ENCODE measurements at regions of chr19 and their contacts with region 1.

Region 1: GRCh38 chr19:35284153-35285094 is 2.1 kb downstream of the HAMP start:
- DNase-seq: no peak
- H3K4me3 ChIP-seq: no peak overlapping the region
- H3K27ac ChIP-seq: no peak overlapping the region
- H3K4me1 ChIP-seq: peaks cover 6% of the 10 kb centered on the region; the same call in 1 of the 2 replicates
- H3K27me3 ChIP-seq: no peaks in the 10 kb centered on the region
- CTCF ChIP-seq: no peak

Region 2: DNA sequence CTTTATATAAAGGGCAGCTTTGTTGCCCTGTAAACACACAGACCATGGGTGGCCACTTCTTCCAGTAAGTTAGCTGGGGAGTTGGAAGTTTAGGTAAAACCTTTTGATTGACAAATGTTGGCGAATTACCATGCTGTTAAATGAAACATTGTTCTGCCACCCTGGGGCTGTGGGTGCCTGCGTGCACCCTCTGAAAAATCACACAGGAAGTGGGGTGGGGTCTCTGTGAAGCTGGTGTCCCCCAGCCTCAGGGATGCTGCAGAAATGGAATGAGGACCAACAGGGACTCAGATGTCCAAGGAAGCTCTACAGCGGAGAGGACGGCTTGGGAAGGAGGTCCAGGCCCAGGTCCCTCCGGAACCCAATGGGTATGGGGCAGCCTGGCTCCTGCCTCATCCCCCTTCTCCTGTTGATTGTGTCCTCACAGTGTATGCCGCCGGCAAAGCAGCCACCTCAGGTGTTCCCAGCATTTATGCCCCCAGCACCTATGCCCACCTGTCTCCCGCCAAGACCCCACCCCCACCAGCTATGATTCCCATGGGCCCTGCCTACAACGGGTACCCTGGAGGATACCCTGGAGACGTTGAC is 18.4 kb before region 1 on chr19:
- CTCF ChIA-PET with region 1: no interaction called
- POLR2A ChIA-PET with region 1: no interaction called
- intact Hi-C with region 1: no loop called
- DNase-seq: no peak
- H3K4me3 ChIP-seq: no peak overlapping the region
- H3K27ac ChIP-seq: no peak overlapping the region
- H3K4me1 ChIP-seq: peaks cover 14% of the 10 kb centered on the region; the same call in 1 of the 2 replicates
- H3K27me3 ChIP-seq: no peaks in the 10 kb centered on the region
- CTCF ChIP-seq: no peak

Region 3: GRCh38 chr19:35302446-35302845 is 18.0 kb after region 1 on chr19:
- CTCF ChIA-PET with region 1: no interaction called
- POLR2A ChIA-PET with region 1: no interaction called
- intact Hi-C with region 1: no loop called
- DNase-seq: no peak
- H3K4me3 ChIP-seq: no peak overlapping the region
- H3K27ac ChIP-seq: no peak overlapping the region
- H3K4me1 ChIP-seq: peaks cover 7% of the 10 kb centered on the region
- H3K27me3 ChIP-seq: no peaks in the 10 kb centered on the region
- CTCF ChIP-seq: no peak

Region 4: GRCh38 chr19:35404879-35405622 is 120.6 kb after region 1 on chr19:
- CTCF ChIA-PET with region 1: no interaction called
- POLR2A ChIA-PET with region 1: no interaction called
- intact Hi-C with region 1: no loop called
- DNase-seq: peak; percentile 41 to 67
- H3K4me3 ChIP-seq: no peak overlapping the region
- H3K27ac ChIP-seq: no peak overlapping the region
- H3K4me1 ChIP-seq: no peaks in the 10 kb centered on the region
- H3K27me3 ChIP-seq: peaks cover 50% of the 10 kb centered on the region
- CTCF ChIP-seq: no peak

Region 5: DNA sequence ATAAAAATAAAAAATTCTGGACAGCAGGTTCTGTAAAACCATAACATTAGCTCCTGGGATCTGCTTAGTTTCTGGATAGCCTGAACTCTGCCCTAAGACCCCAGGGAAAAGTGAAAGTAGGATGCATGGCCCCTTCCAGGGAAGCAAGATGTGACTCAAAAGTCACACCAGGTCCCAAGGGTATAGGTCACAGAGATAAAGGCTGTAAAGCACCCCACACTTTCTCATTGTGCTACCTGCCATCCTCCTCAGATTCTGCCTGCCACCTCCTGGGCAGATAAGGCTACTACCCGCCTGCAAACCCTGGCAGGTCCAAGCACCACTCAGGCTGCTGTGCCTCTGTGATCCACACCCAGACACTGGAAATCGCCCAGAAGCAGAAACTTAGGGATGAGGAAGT is 184.2 kb after region 1 on chr19:
- CTCF ChIA-PET with region 1: no interaction called
- POLR2A ChIA-PET with region 1: no interaction called
- intact Hi-C with region 1: loop called (anchors 5 kb)
- DNase-seq: peak; percentile 38 to 55
- H3K4me3 ChIP-seq: no peak overlapping the region
- H3K27ac ChIP-seq: no peak overlapping the region
- H3K4me1 ChIP-seq: no peaks in the 10 kb centered on the region
- H3K27me3 ChIP-seq: no peaks in the 10 kb centered on the region
- CTCF ChIP-seq: peak; percentile 79

Measured in PC-9 (cell line).